MCF 10A (cell line): ENCODE measurements at regions of chr12 and their contacts with region 1.

Region 1: GRCh38 chr12:121209624-121210572 is at the start of gene P2RX4:
- DNase-seq: peak; percentile 83
- H3K4me3 Mint-ChIP-seq: peak within 1 kb of the TSS; percentile 72
- H3K27ac Mint-ChIP-seq: peak within 1 kb of the TSS; percentile 63
- H3K4me1 Mint-ChIP-seq: peaks cover 12% of the 10 kb centered on the region
- H3K27me3 Mint-ChIP-seq: no peaks in the 10 kb centered on the region
- CTCF ChIP-seq: peak; percentile 10
- total RNA-seq, gene P2RX4: 8.1 and 10.7 TPM in 2 replicates

Region 2: DNA sequence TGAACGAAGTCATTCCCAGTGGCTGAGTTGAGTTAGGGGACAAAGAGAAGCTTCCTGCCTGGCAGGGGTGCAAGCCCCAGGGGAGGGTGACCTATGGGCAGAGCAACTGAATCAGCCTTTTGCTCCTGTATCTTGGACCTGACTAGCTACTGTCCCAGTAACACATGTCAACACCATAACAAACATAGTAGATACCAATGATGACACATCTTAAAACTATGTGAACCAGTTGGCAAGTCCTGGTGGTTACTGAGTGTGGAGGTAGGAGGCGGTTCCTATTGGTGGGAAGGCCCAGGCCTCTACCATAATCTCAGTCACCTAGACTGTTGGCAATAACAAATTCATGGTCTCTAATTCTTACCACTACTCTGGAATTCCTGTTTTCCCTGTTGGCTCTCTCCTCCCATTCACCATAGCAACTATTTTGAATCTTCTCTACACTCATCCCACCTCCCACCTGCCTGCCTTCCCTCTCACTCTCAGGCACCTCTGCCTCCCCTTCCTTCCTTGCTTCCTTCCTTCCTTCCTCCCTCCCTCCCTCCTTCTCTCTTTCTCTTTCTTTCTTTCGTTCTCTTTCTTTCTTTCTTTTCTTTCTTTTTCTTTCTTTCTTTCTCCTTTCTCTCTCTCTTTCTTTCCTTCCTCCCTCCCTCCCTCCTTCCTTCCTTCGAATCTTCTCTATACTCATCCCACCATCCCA is 85.3 kb before region 1 on chr12:
- CTCF ChIA-PET with region 1: no interaction called
- POLR2A ChIA-PET with region 1: no interaction called
- intact Hi-C with region 1: loop called (anchors 5 kb)
- DNase-seq: peak; percentile 90
- H3K4me3 Mint-ChIP-seq: no peak overlapping the region
- H3K27ac Mint-ChIP-seq: peak overlapping the region; percentile 92
- H3K4me1 Mint-ChIP-seq: peaks cover 24% of the 10 kb centered on the region
- H3K27me3 Mint-ChIP-seq: peaks cover 22% of the 10 kb centered on the region
- CTCF ChIP-seq: no peak

Region 3: DNA sequence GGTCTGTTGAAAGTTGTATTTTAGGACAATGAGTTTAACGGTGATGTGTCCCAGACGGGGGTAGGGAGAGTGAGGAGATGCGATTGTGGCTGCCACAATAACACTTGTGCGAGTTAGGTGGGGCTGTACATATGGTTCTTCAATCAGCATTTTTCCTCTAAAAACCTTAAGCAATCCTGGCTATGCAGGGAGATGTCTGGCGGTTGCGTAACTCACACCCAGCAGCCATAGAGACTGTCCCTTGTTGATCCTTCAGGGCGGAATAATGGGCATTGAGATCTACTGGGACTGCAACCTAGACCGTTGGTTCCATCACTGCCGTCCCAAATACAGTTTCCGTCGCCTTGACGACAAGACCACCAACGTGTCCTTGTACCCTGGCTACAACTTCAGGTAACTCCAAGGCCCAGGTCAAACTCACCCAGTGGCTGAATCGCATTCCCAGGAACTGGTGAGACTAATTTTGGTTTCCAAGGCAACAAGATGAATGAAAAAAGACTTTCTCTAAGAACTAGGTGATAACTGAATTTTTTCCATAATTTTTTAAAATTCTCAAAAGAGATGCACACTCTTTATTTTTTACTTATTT is 42.6 kb before region 1 on chr12:
- CTCF ChIA-PET with region 1: no interaction called
- POLR2A ChIA-PET with region 1: no interaction called
- intact Hi-C with region 1: no loop called
- DNase-seq: peak; percentile 67
- H3K4me3 Mint-ChIP-seq: no peak overlapping the region
- H3K27ac Mint-ChIP-seq: no peak overlapping the region
- H3K4me1 Mint-ChIP-seq: peaks cover 11% of the 10 kb centered on the region
- H3K27me3 Mint-ChIP-seq: no peaks in the 10 kb centered on the region
- CTCF ChIP-seq: no peak